Activated B cell treated with CpG ODN at 0.5 μM for 24 hours (primary cell): ENCODE measurements at regions of chr6 and their contacts with region 1.

Region 1: GRCh38 chr6:116111552-116112528 is 11.2 kb downstream of the NT5DC1 start:
- DNase-seq: no peak
- ATAC-seq: no peak
- H3K4me3 Mint-ChIP-seq: no peak overlapping the region
- H3K27ac Mint-ChIP-seq: no peak overlapping the region
- H3K4me1 Mint-ChIP-seq: peaks cover 2% of the 10 kb centered on the region
- H3K27me3 Mint-ChIP-seq: no peaks in the 10 kb centered on the region
- CTCF ChIP-seq: no peak

Region 2: DNA sequence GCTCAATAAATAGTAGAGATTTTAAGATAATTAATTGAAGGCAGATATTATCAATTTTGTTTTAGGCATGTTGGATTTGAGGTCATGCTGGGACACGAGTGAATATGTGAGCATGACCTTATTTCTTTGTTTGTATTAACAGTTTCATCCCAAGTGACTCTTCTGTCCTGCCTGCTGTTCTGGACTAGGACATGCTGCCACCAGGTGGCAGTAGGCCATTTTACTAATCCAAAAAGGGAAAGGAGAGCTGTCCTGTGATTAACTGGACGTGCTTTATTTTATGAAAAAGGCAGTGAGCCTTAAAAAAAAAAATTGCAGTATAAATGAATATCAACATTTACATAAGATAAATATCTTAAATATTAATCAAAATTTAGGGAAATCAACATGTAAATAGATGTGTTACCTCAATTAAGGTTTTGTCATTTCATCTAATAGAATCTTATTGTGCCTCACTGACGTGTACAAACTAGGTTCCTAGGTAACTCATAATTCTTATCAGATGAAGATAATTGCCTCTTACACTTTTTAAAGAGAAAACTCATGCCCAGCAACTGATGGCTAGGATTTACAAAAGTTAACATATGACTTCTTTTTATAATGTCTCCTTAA is 100.9 kb before region 1 on chr6:
- CTCF ChIA-PET with region 1: interaction called, 27 read pairs
- POLR2A ChIA-PET with region 1: no interaction called
- intact Hi-C with region 1: no loop called
- DNase-seq: peak; percentile 29
- ATAC-seq: peak; percentile 64
- H3K4me3 Mint-ChIP-seq: no peak overlapping the region
- H3K27ac Mint-ChIP-seq: no peak overlapping the region
- H3K4me1 Mint-ChIP-seq: peaks cover 32% of the 10 kb centered on the region
- H3K27me3 Mint-ChIP-seq: peaks cover 2% of the 10 kb centered on the region
- CTCF ChIP-seq: peak; percentile 45

Region 3: DNA sequence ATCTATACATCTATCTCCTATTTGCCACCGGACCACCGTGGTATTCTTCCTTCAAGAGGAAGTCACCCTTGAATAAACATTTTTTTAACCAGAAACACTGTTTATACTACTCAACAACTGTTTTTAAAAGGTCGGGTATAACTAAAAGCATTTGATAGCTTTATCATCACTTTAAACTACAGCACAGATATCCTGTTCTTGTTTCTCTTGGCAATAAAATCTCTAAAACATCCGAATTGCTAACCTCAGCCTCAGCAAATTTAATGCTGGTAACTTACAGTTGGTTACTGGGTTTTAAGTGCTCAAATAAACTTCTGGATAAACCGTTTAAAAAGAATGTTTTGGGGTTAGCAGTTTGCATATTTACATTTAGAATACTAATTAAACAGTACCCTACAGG is 536.3 kb after region 1 on chr6:
- CTCF ChIA-PET with region 1: no interaction called
- POLR2A ChIA-PET with region 1: no interaction called
- intact Hi-C with region 1: loop called (anchors 1 kb)
- DNase-seq: no peak
- ATAC-seq: no peak
- H3K4me3 Mint-ChIP-seq: no peak overlapping the region
- H3K27ac Mint-ChIP-seq: no peak overlapping the region
- H3K4me1 Mint-ChIP-seq: peaks cover 2% of the 10 kb centered on the region
- H3K27me3 Mint-ChIP-seq: no peaks in the 10 kb centered on the region
- CTCF ChIP-seq: no peak